Activated CD4-positive, alpha-beta T cell treated with anti-CD3 and anti-CD28 coated beads for 36 hours (primary cell): ENCODE measurements at regions of chr1 and their contacts with region 1.

Region 1: DNA sequence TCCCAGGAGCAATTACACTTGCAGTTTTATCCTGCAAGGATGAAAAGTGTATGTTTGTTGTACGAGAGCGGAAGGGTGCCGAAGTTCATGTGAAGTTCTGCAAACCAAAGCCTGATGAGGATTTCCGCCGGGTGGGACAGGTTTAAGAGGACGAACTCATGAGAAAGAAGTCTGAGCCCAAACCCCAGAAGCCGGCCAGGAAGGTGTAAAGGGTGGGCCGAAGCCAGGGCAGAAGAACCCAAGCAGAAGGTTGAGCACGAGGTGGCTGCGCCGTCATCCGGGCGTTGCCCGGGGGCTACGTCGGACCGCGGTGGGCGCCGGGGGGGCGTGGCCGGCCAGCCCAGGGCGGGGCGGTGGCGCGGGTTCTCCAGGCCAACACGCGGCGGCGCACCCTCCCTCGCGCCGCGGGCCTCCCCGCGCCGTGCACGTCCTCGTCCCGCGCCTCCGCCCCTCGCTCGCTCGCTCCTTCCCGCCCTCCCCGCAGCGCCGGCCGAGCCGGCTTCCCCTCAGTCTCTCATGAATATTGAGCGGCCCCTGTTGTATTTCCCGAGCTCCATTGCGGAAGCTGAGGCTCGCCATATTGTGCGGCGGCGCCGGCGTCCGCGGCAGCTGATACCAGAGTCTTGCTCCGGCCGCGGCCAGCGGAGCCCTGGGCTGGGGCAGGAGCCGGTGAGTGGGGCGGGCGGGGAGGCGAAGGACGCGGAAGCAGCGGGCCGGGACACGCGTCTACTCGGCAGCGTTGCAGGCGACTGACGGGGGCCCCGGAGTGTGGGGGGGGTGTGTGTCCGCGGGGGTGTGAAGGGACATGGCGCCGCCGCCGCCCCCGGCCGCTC is at the start of gene RNF2:
- DNase-seq: peak; percentile 87
- ATAC-seq: peak; percentile 87
- H3K4me3 Mint-ChIP-seq: peak within 1 kb of the TSS; percentile 94
- H3K27ac Mint-ChIP-seq: peak within 1 kb of the TSS; percentile 86
- H3K4me1 Mint-ChIP-seq: peaks cover 34% of the 10 kb centered on the region
- H3K27me3 Mint-ChIP-seq: no peaks in the 10 kb centered on the region
- total RNA-seq, gene RNF2: 19.6 to 23.6 TPM

Region 2: DNA sequence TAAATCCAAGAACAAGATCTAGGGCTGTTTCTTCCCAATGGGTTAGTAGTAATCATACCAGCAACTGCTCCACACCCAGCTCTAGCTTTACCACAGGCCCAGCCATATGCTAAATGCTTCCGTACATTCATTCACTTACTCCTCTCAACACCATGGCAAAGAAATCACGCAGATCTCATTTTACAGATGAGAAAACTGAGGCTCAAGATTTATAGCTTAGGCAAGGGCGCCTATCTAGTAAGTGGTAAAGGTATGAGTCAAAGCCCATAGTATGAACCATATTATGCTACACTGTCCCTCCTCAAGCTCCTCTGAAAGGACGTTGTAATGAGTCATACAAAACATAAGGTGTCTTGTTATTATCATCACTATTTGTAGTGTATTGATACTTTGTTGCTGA is 153.1 kb before region 1 on chr1:
- CTCF ChIA-PET with region 1: no interaction called
- POLR2A ChIA-PET with region 1: no interaction called
- intact Hi-C with region 1: loop called in 1 of 2 experiments (anchors 5 kb)
- DNase-seq: peak; percentile 48
- ATAC-seq: peak; percentile 74
- H3K4me3 Mint-ChIP-seq: no peak overlapping the region
- H3K27ac Mint-ChIP-seq: peak overlapping the region; percentile 67
- H3K4me1 Mint-ChIP-seq: peaks cover 52% of the 10 kb centered on the region
- H3K27me3 Mint-ChIP-seq: no peaks in the 10 kb centered on the region

Region 3: GRCh38 chr1:185059950-185060571 is 14.9 kb after region 1 on chr1:
- CTCF ChIA-PET with region 1: interaction called, 7 read pairs
- POLR2A ChIA-PET with region 1: interaction called, 3 read pairs
- intact Hi-C with region 1: loop called in 1 of 2 experiments (anchors 1 kb)
- DNase-seq: no peak
- ATAC-seq: peak; percentile 53
- H3K4me3 Mint-ChIP-seq: no peak overlapping the region
- H3K27ac Mint-ChIP-seq: no peak overlapping the region
- H3K4me1 Mint-ChIP-seq: peaks cover 51% of the 10 kb centered on the region
- H3K27me3 Mint-ChIP-seq: no peaks in the 10 kb centered on the region

Region 4: GRCh38 chr1:185066181-185066580 is 21.0 kb after region 1 on chr1:
- CTCF ChIA-PET with region 1: interaction called, 6 read pairs
- POLR2A ChIA-PET with region 1: interaction called, 3 read pairs
- intact Hi-C with region 1: loop called in 1 of 2 experiments (anchors 2 kb)
- DNase-seq: no peak
- ATAC-seq: no peak
- H3K4me3 Mint-ChIP-seq: no peak overlapping the region
- H3K27ac Mint-ChIP-seq: no peak overlapping the region
- H3K4me1 Mint-ChIP-seq: peaks cover 53% of the 10 kb centered on the region
- H3K27me3 Mint-ChIP-seq: no peaks in the 10 kb centered on the region

Region 5: DNA sequence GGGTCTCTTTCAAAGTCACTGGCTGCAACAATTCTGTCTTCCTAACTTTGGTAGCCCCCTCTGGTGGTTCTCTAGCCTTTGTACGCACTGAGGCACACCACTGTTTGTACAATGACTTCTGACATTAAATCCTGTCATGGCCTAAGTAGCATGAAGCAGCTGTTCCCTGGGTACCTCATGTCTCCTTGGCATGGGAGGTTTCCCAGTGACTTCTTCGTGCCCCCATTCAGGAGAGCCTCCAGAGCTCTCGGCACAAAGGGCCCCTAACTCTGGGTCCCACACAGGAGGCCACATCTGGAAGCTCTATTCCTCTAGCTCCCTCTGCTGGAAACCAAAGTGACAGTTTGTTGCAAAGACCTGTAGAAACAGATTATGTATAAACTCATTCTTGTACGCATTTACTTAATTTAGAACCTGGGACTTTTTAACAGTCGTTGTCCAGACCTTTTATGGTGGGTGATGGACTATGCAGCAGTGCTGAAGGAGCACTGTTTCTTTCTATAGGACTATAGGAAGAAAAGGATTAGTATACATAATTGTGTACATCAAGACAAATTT is 125.2 kb after region 1 on chr1:
- CTCF ChIA-PET with region 1: interaction called, 8 read pairs
- POLR2A ChIA-PET with region 1: no interaction called
- intact Hi-C with region 1: loop called in 1 of 2 experiments (anchors 1 kb)
- DNase-seq: peak; percentile 53
- ATAC-seq: peak; percentile 89
- H3K4me3 Mint-ChIP-seq: no peak overlapping the region
- H3K27ac Mint-ChIP-seq: no peak overlapping the region
- H3K4me1 Mint-ChIP-seq: peaks cover 7% of the 10 kb centered on the region
- H3K27me3 Mint-ChIP-seq: no peaks in the 10 kb centered on the region

Region 6: DNA sequence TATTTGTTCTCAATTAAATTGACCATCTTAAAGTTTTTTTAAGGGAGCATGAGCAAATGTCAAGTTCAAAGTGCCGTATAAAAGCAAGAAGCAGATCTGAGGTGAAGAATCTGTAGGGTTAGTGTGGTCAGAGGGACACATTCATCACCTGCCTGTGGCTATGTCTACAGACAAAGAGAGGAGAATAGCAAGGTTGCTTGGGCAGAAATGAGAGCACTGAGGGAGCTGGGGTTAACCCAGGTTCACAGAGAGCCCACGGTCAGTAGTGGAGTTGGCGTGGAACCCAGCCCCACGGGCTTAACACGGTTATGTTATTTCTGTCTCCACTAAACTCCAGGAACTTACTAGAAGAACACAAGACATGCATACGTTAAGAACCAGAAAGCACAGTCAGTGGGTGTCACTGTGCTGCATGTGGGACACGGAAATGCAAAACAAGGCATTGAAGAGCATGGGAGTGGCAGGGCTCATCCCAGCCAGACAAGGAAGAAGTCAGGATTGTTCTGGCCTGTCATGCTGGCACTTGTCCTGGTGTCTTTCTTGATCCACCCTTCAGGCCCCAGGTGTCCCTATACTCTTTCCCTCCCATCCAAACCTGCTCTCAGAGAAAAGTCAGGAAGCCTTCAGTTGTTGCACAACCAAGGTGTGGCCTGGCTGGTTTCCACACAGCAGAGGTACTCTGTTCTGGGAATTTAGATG is 367.3 kb after region 1 on chr1:
- CTCF ChIA-PET with region 1: no interaction called
- POLR2A ChIA-PET with region 1: no interaction called
- intact Hi-C with region 1: no loop called
- DNase-seq: no peak
- ATAC-seq: no peak
- H3K4me3 Mint-ChIP-seq: no peak overlapping the region
- H3K27ac Mint-ChIP-seq: no peak overlapping the region
- H3K4me1 Mint-ChIP-seq: peaks cover 3% of the 10 kb centered on the region
- H3K27me3 Mint-ChIP-seq: no peaks in the 10 kb centered on the region

Region 7: DNA sequence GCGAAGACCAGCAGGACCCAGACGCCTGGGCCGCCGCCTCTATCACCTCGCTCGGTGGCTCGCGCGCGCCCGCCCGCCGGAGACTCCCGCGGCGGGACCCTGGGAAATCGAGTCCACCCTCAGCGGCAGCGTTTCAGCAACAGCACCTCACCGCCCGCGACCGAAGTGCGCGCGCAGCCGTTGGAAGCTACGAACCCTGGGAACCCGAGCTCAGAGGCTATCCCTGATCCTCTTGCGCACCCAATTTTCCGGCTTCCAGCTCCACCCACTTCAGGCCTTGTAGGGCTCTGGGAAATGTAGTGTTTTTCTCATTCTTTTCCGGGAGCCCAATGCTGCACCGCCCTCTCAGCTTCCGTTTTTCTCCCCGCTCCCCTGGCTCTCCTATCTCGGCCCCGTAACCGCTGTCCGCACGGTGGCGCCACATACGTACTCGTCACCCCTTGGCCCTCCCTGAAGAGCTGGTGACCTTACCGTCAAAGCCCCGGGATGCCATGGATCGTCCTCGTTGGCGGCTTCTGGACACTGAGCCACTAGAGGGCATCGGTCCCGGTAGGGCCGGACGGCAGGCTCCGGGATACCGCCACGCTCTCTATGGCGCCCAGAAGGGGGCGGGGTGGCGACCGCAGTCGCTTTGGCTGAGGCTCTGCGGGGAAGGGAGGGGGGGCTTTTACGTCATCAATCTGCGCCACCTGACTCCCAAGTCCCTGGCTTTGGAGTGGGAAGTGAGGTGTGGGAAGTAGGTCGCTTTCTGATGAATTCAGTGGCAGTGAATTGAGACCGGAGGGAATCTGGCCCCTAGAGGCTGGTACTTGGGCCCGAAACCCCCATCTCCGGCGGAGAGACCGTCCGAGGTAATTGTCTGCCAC is 1330.1 kb after region 1 on chr1 and contains the starts of genes ODR4 and TPR:
- CTCF ChIA-PET with region 1: no interaction called
- POLR2A ChIA-PET with region 1: no interaction called
- intact Hi-C with region 1: loop called in 1 of 2 experiments (anchors 5 kb)
- DNase-seq: peak; percentile 97
- ATAC-seq: peak; percentile 90
- H3K4me3 Mint-ChIP-seq: peak within 1 kb of the TSS; percentile 98
- H3K27ac Mint-ChIP-seq: peak within 1 kb of the TSS; percentile 98
- H3K4me1 Mint-ChIP-seq: peaks cover 37% of the 10 kb centered on the region
- H3K27me3 Mint-ChIP-seq: no peaks in the 10 kb centered on the region
- total RNA-seq, gene ODR4: 13.1 to 14.0 TPM
- total RNA-seq, gene TPR: 151 to 152 TPM